ENCODE measurements at regions of chr15 and their contacts with region 1.

Region 1: DNA sequence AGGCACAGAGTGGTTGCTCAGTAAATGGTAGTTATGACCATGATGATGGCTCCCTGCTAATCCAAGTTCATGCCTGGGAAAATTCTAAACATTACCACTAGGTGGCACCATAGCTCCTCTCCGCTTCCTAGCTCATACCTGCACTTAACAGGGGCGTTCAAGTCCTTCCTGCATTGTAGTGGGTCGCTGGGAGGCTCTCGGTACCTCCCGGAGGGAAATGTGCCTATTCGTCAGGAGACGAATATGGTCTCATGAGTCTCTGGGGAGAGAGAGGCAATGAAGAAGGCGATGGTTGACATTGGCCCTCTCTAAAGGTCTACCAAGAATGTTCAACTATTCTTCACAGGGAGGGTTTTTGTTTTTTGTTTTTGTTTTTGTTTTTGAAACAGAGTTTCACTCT is 10.9 kb downstream of the MESP1 start:
- DNase-seq: peak; percentile 81
- CTCF ChIP-seq: peak; percentile 79

Region 2: GRCh38 chr15:89656116-89656815 is 83.9 kb before region 1 on chr15:
- CTCF ChIA-PET with region 1: interaction called, 11 read pairs
- POLR2A ChIA-PET with region 1: no interaction called
- DNase-seq: no peak
- CTCF ChIP-seq: no peak

Region 3: DNA sequence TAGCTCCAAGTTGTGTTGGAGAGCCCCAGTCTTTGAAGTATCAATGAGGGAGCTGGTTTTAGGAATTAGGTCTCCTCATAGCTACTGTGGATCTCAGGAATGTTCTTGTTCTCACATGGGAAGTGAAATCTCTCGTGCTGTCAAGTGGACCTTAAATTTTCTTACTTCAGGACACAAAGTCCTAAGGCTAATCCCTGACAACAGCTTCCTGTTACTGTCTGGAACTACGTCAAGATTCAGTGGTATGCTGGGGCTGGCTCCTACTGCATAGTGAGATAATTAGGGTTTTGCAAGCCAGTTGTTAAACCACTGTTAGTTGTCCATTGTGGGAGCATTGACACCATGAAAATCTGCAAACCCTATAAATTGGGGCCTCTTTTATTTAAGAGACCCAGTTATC is 11.9 kb before region 1 on chr15:
- CTCF ChIA-PET with region 1: interaction called, 22 read pairs
- POLR2A ChIA-PET with region 1: no interaction called
- DNase-seq: no peak
- CTCF ChIP-seq: no peak

Region 4: DNA sequence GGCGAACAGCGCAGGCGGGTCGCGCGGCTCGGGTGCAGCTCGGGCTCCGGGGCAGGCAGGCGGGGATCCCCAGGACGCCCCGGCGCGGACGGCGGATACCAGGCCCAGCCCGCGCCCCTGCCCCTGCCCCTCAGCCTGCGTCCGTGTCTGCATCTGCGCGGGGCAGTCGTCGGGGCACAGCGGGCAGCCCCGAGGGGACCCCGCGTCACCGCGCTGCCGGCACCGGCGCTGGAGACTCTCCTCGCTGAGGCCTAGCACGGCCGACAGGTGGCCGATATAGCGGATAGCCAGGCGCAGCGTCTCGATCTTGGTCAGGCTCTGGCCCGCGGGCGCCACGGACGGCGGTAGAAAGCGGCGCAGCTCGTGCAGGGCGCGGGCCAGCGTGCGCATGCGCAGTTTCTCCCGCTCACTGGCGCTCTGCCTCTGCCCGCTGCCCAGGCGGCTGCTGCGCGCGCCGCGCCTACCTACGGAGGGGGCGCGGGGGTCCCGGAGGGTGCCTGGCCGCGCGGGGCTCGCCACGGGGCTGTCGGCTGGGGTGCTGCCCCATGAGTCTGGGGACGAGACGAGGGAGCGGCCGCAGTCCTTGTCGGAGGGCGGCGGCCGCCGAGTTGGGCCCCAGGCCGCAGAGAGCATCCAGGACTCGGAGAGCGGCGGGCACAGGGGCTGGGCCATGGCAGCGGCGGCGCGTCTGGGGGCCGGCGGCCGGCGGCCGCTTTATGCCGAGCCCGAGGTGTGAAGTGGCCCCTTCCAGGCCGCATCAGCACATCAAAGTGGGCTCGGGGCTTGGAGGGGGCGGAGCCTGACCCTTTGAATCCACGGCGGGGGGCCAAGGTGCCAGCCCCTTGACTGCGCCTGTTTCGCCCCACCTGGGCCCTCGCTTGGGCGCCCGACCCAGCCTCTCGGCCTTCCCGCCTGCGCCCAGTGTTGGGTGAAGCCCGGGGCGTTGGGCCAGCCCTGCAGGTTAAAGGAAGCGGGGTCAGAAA is 10.7 kb after region 1 on chr15 and contains the start of gene MESP1:
- CTCF ChIA-PET with region 1: interaction called, 45 read pairs
- POLR2A ChIA-PET with region 1: interaction called, 7 read pairs
- DNase-seq: peak; percentile 95
- CTCF ChIP-seq: peak; percentile 80

Region 5: GRCh38 chr15:89888214-89888804 is 148.2 kb after region 1 on chr15:
- CTCF ChIA-PET with region 1: interaction called, 13 read pairs
- POLR2A ChIA-PET with region 1: no interaction called
- DNase-seq: no peak
- CTCF ChIP-seq: no peak